Activated T-helper 2 cell treated with anti-CD3 and anti-CD28 coated beads, Interferon-gamma antibody, Interleukin-2, Interleukin-4, amounts not matched to agents 10 μg/mL and 5 μg/mL and 100 μg/mL, durations not matched to agents 14 hours and 24 hours and 36 hours (primary cell): ENCODE measurements at regions of chr1 and their contacts with region 1.

Region 1: GRCh38 chr1:199684686-199685273 is 342.7 kb upstream of the NR5A2 start:
- DNase-seq: no peak
- H3K4me3 Mint-ChIP-seq: no peak overlapping the region
- H3K27ac Mint-ChIP-seq: no peak overlapping the region
- H3K4me1 Mint-ChIP-seq: no peaks in the 10 kb centered on the region
- H3K27me3 Mint-ChIP-seq: peaks cover 12% of the 10 kb centered on the region

Region 2: DNA sequence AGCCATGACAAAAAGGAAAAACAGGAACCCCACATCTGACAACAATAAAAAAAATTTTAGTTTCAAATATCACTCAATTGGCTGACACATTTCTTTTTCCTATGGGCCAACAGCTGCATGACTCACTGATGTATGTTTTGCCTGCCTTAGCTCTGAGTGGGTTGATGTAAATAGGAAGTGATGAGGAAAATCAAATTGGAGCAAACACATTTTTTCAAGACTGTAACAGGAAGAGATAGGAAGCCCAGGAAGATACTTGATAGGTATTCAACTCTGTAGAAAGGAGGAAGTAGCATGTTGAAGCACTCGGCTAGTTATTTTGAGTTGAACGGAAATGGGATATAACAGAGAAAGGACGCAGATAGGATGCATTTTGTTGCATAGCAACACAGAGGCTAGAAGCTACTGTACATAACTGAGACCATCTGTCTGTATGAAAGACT is 174.7 kb after region 1 on chr1:
- intact Hi-C with region 1: no loop called
- DNase-seq: no peak
- H3K4me3 Mint-ChIP-seq: no peak overlapping the region
- H3K27ac Mint-ChIP-seq: no peak overlapping the region
- H3K4me1 Mint-ChIP-seq: peaks cover 5% of the 10 kb centered on the region
- H3K27me3 Mint-ChIP-seq: peaks cover 9% of the 10 kb centered on the region

Region 3: GRCh38 chr1:200038981-200039848 is 354.4 kb after region 1 on chr1:
- intact Hi-C with region 1: loop called (anchors 10 kb)
- DNase-seq: no peak
- H3K4me3 Mint-ChIP-seq: no peak overlapping the region
- H3K27ac Mint-ChIP-seq: no peak overlapping the region
- H3K4me1 Mint-ChIP-seq: peaks cover 8% of the 10 kb centered on the region
- H3K27me3 Mint-ChIP-seq: peaks cover 44% of the 10 kb centered on the region

Region 4: GRCh38 chr1:200198247-200198646 is 513.5 kb after region 1 on chr1:
- intact Hi-C with region 1: no loop called
- DNase-seq: no peak
- H3K4me3 Mint-ChIP-seq: no peak overlapping the region
- H3K27ac Mint-ChIP-seq: no peak overlapping the region
- H3K4me1 Mint-ChIP-seq: no peaks in the 10 kb centered on the region
- H3K27me3 Mint-ChIP-seq: peaks cover 23% of the 10 kb centered on the region

Region 5: GRCh38 chr1:200279810-200280411 is 595.1 kb after region 1 on chr1:
- intact Hi-C with region 1: loop called (anchors 10 kb)
- DNase-seq: no peak
- H3K4me3 Mint-ChIP-seq: no peak overlapping the region
- H3K27ac Mint-ChIP-seq: no peak overlapping the region
- H3K4me1 Mint-ChIP-seq: no peaks in the 10 kb centered on the region
- H3K27me3 Mint-ChIP-seq: peaks cover 19% of the 10 kb centered on the region

Region 6: DNA sequence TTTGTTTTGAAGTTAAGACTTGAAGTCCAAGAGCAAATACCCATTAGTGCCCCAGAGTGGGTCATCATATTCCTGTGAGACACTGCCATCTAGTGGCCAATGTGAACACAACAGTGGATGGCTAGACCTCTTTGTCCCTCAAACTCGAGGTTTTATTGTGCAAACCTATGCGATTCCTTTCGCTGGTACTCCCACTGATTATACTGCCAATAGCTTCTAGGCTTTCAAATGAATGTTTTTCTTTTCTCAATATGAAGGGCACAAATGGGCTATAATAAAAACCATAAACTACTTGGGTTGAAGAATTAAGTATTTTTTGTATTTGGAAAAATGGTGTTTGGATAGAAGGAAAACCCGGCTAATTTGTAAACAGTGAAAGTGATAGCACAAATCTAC is 825.4 kb after region 1 on chr1:
- intact Hi-C with region 1: loop called (anchors 1 kb)
- DNase-seq: peak; percentile 44
- H3K4me3 Mint-ChIP-seq: no peak overlapping the region
- H3K27ac Mint-ChIP-seq: no peak overlapping the region
- H3K4me1 Mint-ChIP-seq: peaks cover 3% of the 10 kb centered on the region
- H3K27me3 Mint-ChIP-seq: peaks cover 11% of the 10 kb centered on the region